AG04449 (cell line): ENCODE measurements at regions of chr3 and their contacts with region 1.

Region 1: DNA sequence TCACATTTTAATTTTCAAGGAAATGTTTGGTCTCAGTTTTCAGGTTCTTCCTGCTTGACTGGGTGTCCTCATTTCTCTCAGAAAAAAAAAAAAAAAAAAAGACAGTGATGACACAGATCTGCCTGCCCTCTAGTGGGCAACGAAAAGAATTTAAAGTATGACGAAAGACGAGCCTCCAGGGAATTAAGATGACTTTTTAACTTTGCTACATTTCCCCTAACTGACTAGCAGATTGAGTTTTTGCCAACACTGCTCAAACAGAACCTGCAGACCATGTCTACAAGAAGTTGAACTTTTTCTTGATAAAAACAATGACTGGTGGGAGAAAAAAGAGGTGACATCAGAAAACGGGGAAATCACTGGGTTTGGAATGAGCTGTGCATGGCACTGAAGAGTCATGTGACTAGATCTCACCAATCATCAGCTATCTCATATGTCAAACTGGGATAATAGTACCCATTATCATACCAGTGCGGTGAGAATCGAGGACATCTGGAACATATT is 40.8 kb downstream of the EOMES start:
- DNase-seq: peak; percentile 54
- H3K4me3 ChIP-seq: no peak overlapping the region
- CTCF ChIP-seq: peak; percentile 24

Region 2: GRCh38 chr3:27467545-27467944 is 213.8 kb before region 1 on chr3:
- CTCF ChIA-PET with region 1: interaction called, 30 read pairs
- POLR2A ChIA-PET with region 1: no interaction called
- DNase-seq: no peak
- H3K4me3 ChIP-seq: no peak overlapping the region
- CTCF ChIP-seq: peak; percentile 36

Region 3: DNA sequence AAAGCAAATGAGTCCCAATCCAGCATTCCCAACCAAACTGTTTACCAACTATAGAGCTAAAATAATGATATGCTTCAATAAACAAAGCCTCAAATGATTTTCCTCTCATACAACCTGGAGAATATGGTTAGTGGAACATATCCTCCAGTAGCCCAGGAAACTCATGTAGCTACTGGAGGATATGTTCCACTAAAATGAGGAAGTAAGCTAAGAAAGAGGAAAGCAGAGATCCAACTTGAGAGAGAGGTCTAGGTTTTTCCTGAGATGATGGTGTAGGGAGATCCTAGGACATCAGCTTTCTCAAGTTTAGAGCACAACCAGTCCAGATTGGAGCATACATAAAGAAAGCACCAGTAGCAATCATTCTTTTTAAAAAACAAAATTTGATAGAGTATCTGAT is 152.5 kb before region 1 on chr3:
- CTCF ChIA-PET with region 1: interaction called, 11 read pairs
- POLR2A ChIA-PET with region 1: interaction called, 6 read pairs
- DNase-seq: no peak
- H3K4me3 ChIP-seq: no peak overlapping the region
- CTCF ChIP-seq: no peak

Region 4: DNA sequence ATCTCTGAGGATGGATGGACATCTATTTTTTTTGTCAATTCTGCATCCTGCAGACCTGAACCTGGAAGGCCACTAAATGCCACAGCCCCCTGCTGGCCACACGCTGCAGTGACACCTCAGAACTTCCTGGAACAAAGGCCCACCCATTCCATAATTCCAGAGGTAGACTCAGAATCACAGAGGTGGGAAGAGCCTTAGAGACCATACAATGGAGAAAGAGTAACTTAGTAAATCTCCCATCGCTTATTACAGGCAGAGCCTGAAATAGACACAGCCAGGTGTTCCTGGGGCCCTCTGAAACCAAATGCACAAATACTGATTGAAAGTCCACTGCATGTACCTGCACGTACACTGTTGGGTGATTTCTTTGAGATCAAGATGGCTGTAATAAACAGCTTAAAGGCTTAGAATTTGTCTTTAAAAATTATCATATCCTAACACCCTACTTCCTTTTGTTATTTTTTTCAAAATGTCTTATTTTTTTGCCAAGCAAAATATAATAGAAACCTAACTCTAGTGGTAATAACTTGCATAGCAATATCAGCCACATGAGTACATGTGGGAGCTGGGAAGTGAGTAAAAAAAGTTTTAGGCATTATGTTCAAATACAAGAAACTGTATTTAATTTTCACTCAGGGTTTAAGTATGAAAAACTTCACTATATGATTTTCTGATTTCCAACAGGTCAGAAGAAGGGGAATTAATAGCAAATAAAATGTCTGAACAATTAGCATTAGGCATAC is 21.8 kb before region 1 on chr3:
- CTCF ChIA-PET with region 1: interaction called, 12 read pairs
- POLR2A ChIA-PET with region 1: no interaction called
- DNase-seq: no peak
- H3K4me3 ChIP-seq: no peak overlapping the region
- CTCF ChIP-seq: peak; percentile 75